Mammary epithelial cell (primary cell): ENCODE measurements at regions of chrX and their contacts with region 1.

Region 1: DNA sequence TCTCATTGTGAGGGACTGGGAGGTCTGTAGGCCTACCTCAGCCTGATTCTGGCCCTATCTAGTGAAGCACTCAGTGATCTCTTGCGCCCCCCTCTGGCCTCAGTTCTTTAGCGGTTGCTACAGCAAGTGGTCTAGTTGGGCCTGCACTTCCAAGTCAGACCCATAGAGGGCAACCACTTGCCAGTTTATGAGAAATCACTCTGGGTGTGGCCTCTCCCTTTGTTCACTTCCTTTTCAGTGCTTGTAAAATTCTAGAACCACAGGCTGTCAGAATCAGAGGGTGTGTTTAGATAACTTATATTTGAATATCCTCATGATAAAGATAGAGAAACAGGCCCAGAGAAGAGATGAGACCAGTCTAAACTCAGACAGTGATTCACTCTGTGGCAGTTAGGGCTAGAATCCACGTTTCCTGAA is 60.9 kb upstream of the LAS1L start:
- DNase-seq: peak; percentile 81
- H3K4me3 ChIP-seq: no peak overlapping the region
- H3K27ac ChIP-seq: peak overlapping the region; percentile 53
- H3K4me1 ChIP-seq: peaks cover 12% of the 10 kb centered on the region
- H3K27me3 ChIP-seq: no peaks in the 10 kb centered on the region
- CTCF ChIP-seq: peak; percentile 95 to 99

Region 2: DNA sequence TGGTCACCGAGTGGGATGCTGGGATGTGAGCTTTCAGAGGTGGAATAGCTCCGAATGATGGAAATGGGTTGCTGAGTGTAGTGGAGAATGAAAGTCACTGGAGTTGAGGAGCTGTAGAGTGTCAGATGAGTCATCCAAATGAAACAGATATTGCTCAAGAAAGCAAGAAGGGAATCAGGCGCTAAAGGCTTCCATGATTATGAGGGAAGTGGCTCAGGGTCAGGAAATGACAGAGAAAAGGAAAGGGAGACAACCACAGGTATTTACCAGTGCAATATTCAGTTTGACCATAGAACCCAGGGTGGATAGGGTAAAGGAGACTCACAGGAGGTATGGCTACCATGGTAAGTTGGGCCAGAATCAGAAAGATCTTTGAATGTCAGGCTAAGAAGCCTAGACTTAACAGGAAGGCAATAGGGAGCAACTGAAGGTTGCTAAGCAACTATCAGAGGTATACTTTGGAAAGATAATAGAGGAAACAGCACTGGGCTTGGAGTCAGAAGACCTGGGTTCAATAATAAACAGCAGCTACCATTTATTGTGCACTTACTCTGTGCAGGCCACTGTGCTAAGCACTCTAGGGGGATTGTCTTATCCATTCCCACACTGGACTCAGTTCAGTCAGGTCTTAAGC is 72.6 kb before region 1 on chrX:
- CTCF ChIA-PET with region 1: no interaction called
- dilution Hi-C with region 1: no loop called
- in situ Hi-C with region 1: no loop called
- intact Hi-C with region 1: no loop called
- DNase-seq: peak; percentile 34
- H3K4me3 ChIP-seq: no peak overlapping the region
- H3K27ac ChIP-seq: no peak overlapping the region
- H3K4me1 ChIP-seq: no peaks in the 10 kb centered on the region
- H3K27me3 ChIP-seq: no peaks in the 10 kb centered on the region
- CTCF ChIP-seq: no peak

Region 3: DNA sequence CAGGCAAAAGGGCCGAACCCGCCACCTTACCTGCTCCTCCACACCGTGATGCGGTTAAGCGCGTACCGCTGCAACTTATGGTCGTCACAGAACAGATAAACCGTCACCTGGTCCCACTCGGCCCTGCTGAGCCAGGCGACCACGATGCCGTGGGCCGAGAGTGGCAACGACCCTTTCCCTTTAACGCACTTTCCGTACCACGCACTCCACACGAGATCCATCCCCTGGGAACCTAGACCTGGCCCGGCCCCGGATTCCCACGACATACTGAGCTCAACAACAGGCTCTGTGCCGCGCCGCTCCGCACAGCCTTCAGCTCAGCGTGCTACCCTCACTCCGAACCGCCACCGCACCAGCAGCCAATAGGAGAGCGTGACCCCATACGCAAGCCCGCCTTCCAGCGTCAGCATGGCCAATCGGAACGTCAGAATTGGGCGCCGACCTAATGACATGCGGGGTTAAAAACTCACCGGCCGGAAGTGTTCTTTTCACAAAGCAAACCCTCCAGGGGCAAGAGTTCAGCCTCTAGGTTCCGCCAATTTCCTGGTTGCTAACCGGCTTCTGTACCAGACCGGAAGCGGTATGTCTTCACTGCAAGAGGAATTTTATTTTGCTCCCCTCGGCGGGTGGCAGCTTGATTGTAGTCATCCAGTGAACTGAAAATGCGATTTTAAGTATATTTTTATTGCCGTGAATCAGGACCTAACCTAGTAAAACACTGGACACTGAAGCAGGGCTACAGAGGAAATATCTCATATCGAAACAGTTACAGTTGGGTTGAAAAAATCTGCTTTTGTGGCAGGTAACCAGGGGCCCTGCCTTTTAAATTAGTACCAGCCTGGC is 60.8 kb before region 1 on chrX and contains the start of gene LAS1L:
- CTCF ChIA-PET with region 1: no interaction called
- dilution Hi-C with region 1: no loop called
- in situ Hi-C with region 1: no loop called
- intact Hi-C with region 1: no loop called
- DNase-seq: peak; percentile 91
- H3K4me3 ChIP-seq: peak within 1 kb of the TSS; percentile 46 to 86 (median 65)
- H3K27ac ChIP-seq: peak within 1 kb of the TSS; percentile 51
- H3K4me1 ChIP-seq: no peaks in the 10 kb centered on the region
- H3K27me3 ChIP-seq: no peaks in the 10 kb centered on the region
- CTCF ChIP-seq: no peak
- total RNA-seq, gene LAS1L: 12.0 to 37.2 TPM

Region 4: GRCh38 chrX:65581661-65582339 is 13.7 kb before region 1 on chrX:
- CTCF ChIA-PET with region 1: no interaction called
- dilution Hi-C with region 1: no loop called
- in situ Hi-C with region 1: no loop called
- intact Hi-C with region 1: loop called (anchors 1 kb)
- DNase-seq: peak; percentile 49
- H3K4me3 ChIP-seq: no peak overlapping the region
- H3K27ac ChIP-seq: no peak overlapping the region
- H3K4me1 ChIP-seq: no peaks in the 10 kb centered on the region
- H3K27me3 ChIP-seq: no peaks in the 10 kb centered on the region
- CTCF ChIP-seq: peak; percentile 72 to 75

Region 5: DNA sequence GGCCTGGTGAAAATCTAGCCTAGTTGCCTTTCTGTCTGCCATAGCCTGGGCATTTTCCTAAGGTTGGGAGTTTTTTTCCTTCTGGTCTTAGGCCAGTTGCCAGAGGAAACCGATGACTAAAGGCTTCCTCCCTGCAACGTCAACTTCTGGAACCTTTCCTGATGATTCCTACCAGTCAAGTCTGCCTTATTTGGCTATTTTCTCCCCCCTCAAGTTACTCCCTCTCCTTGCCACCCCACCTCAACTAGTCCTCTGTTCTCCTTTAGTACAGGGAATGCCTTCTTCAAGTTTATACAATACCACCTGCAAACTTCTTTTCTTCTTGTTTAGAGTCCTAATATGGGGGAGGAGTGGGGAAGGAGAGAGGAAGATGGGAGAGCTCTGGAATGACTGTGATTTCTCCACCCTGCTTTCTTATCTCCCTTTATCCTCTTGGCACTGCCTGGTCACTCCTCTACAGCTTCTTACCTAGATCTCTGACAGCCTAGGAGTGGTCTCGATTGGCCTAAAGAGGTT is 82.5 kb after region 1 on chrX:
- CTCF ChIA-PET with region 1: no interaction called
- dilution Hi-C with region 1: no loop called
- in situ Hi-C with region 1: no loop called
- intact Hi-C with region 1: loop called (anchors 1 kb)
- DNase-seq: peak; percentile 79
- H3K4me3 ChIP-seq: no peak overlapping the region
- H3K27ac ChIP-seq: peak overlapping the region; percentile 75
- H3K4me1 ChIP-seq: peaks cover 40% of the 10 kb centered on the region
- H3K27me3 ChIP-seq: no peaks in the 10 kb centered on the region
- CTCF ChIP-seq: no peak

Region 6: DNA sequence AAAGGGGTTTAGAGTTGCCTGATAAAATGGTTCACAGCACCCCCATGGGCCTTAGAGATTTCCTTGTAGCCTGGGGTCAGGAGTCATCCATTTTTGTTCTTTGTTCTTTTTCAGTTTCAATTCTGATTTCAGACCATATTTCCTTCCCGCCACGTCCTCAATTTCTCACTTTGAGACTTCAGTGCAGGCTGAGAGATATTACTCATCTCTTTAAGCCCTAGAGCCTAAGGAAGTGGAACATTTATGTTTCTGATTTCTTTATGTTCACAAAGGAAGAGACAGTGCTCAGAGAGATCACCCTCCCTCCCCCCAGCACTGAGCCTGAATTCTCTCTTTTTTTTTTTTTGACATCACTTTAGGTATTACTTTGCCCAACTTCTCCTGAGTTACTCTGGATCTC is 128.2 kb after region 1 on chrX:
- CTCF ChIA-PET with region 1: no interaction called
- dilution Hi-C with region 1: no loop called
- in situ Hi-C with region 1: no loop called
- intact Hi-C with region 1: no loop called
- DNase-seq: no peak
- H3K4me3 ChIP-seq: no peak overlapping the region
- H3K27ac ChIP-seq: no peak overlapping the region
- H3K4me1 ChIP-seq: no peaks in the 10 kb centered on the region
- H3K27me3 ChIP-seq: no peaks in the 10 kb centered on the region
- CTCF ChIP-seq: no peak

Region 7: GRCh38 chrX:65745992-65746391 is 150.5 kb after region 1 on chrX:
- CTCF ChIA-PET with region 1: no interaction called
- dilution Hi-C with region 1: no loop called
- in situ Hi-C with region 1: no loop called
- intact Hi-C with region 1: loop called (anchors 1 kb)
- DNase-seq: no peak
- H3K4me3 ChIP-seq: no peak overlapping the region
- H3K27ac ChIP-seq: no peak overlapping the region
- H3K4me1 ChIP-seq: peaks cover 11% of the 10 kb centered on the region
- H3K27me3 ChIP-seq: no peaks in the 10 kb centered on the region
- CTCF ChIP-seq: peak; percentile 25 to 37

Region 8: DNA sequence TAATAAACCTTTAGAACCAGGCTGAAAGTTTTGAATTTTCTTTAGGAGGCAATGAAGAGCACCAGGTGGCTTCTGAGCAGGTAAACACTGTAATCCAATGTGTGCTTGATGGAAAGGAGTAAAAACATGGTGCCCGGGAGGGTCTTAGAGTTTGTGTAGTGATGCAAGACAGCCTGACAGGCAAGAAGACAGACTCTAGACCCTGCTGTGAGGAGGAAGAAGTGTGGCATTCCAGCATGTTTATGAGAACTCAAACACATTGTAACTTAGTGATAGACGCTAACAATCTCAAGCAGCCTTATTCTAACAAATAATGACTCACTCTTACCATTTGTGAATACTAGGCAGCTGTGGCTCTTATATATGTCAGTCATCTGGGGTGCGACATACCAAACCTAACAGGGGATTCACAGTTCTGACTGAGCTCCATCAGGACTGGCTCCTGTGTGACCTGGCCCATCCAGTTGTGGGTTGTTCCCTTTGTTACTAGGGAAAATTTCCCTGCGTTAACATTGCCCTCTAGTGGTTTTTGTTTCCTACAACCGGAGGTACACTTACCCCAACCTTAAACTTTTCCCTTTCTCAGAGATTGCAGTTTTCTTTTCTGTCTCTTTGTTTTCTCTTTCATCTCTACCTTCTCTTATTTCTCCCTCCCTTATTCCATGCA is 390.6 kb after region 1 on chrX:
- CTCF ChIA-PET with region 1: no interaction called
- dilution Hi-C with region 1: no loop called
- in situ Hi-C with region 1: loop called in 1 of 2 experiments (anchors 25 kb)
- intact Hi-C with region 1: loop called (anchors 1 kb)
- DNase-seq: peak; percentile 59
- H3K4me3 ChIP-seq: no peak overlapping the region
- H3K27ac ChIP-seq: no peak overlapping the region
- H3K4me1 ChIP-seq: no peaks in the 10 kb centered on the region
- H3K27me3 ChIP-seq: no peaks in the 10 kb centered on the region
- CTCF ChIP-seq: peak; percentile 33 to 57